ENCODE measurements at regions of chr7 and their contacts with region 1.

Region 1: DNA sequence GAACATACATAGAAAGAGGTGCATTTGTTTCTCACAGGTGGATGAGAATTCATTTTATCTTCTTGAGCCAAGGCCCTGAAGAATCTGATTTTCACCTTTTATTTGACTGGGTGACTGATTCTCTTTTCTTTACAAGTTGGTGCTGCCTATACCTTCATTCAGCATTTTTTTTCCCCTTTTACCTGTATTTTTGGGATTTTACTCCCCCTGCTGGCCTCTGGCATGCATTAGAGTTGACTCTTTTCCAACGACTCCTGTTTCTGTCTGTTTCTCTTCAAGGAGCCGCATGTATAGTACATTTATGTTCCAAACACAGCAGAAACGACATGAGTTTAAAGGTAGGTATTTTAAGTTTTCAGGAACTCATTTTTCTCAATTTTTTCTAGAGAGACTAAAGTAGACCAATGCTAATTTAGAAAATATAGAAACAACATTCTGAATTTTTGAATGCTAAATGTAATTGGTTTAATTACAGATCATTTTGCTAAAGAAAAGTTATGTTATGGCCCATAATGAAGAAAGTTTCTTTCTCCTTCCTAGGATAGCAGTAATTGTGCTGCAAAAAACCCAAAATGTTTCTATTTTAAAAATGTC is 149.8 kb upstream of the HDAC9 start:
- DNase-seq: peak; percentile 11
- H3K4me3 ChIP-seq: no peak overlapping the region
- H3K27ac ChIP-seq: no peak overlapping the region
- H3K4me1 ChIP-seq: no peaks in the 10 kb centered on the region
- H3K27me3 ChIP-seq: no peaks in the 10 kb centered on the region
- CTCF ChIP-seq: peak; percentile 20 to 74 (median 60)
- POLR2A ChIP-seq: no peak

Region 2: GRCh38 chr7:17940302-17940883 is 405.3 kb before region 1 on chr7 and contains the start of gene SNX13:
- intact Hi-C with region 1: loop called (anchors 10 kb)
- DNase-seq: peak; percentile 91
- H3K4me3 ChIP-seq: peak within 1 kb of the TSS; percentile 80 to 90
- H3K27ac ChIP-seq: peak within 1 kb of the TSS; percentile 97 to 99
- H3K4me1 ChIP-seq: peaks cover 3% of the 10 kb centered on the region
- H3K27me3 ChIP-seq: no peaks in the 10 kb centered on the region
- CTCF ChIP-seq: peak; percentile 28 to 50 (median 38)
- POLR2A ChIP-seq: peak; percentile 74
- total RNA-seq, gene SNX13: 46.9 to 63.5 TPM

Region 3: DNA sequence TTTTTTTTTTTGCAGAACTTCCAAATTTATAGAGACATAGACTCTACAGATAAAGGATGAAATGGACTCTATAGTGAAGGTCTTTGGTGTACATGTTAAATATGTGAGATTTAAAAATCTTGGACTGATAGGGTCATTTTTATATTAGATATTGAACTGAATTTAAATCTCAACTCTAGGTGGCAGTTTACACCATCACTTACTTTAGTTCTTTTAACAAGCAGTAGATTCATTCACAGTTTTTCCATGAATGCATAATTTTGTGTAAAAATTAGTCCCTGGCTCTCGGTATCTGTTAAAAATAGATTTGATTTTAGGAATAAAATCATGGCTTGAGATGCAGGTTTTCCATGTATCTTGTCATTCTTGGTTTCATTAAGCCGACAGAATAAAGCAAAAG is 374.3 kb before region 1 on chr7:
- intact Hi-C with region 1: loop called (anchors 10 kb)
- DNase-seq: no peak
- H3K4me3 ChIP-seq: no peak overlapping the region
- H3K27ac ChIP-seq: no peak overlapping the region
- H3K4me1 ChIP-seq: no peaks in the 10 kb centered on the region
- H3K27me3 ChIP-seq: no peaks in the 10 kb centered on the region
- CTCF ChIP-seq: peak in 1 of 4 experiments; percentile 13
- POLR2A ChIP-seq: no peak

Region 4: GRCh38 chr7:18119985-18120384 is 225.8 kb before region 1 on chr7:
- intact Hi-C with region 1: loop called (anchors 10 kb)
- DNase-seq: no peak
- H3K4me3 ChIP-seq: no peak overlapping the region
- H3K27ac ChIP-seq: no peak overlapping the region
- H3K4me1 ChIP-seq: no peaks in the 10 kb centered on the region
- H3K27me3 ChIP-seq: no peaks in the 10 kb centered on the region
- CTCF ChIP-seq: no peak
- POLR2A ChIP-seq: no peak

Region 5: GRCh38 chr7:18798088-18798906 is 452.6 kb after region 1 on chr7:
- intact Hi-C with region 1: no loop called
- DNase-seq: no peak
- H3K4me3 ChIP-seq: no peak overlapping the region
- H3K27ac ChIP-seq: no peak overlapping the region
- H3K4me1 ChIP-seq: peaks cover 4% of the 10 kb centered on the region
- H3K27me3 ChIP-seq: no peaks in the 10 kb centered on the region
- CTCF ChIP-seq: no peak
- POLR2A ChIP-seq: no peak

Measured in prostate gland (tissue), 2 donors.